CD4-positive, alpha-beta T cell (primary cell): ENCODE measurements at regions of chr9 and their contacts with region 1.

Region 1: GRCh38 chr9:100028201-100028784 is 70.5 kb downstream of the ERP44 start:
- DNase-seq: peak; percentile 34 to 77 (median 54)
- ATAC-seq: peak; percentile 92
- H3K4me3 ChIP-seq: no peak overlapping the region
- H3K4me3 Mint-ChIP-seq: no peak overlapping the region
- H3K27ac ChIP-seq: no peak overlapping the region
- H3K27ac Mint-ChIP-seq: no peak overlapping the region
- H3K4me1 ChIP-seq: no peaks in the 10 kb centered on the region
- H3K4me1 Mint-ChIP-seq: peaks cover 5% of the 10 kb centered on the region
- H3K27me3 ChIP-seq: no peaks in the 10 kb centered on the region
- H3K27me3 Mint-ChIP-seq: no peaks in the 10 kb centered on the region
- CTCF ChIP-seq: peak; percentile 87

Region 2: DNA sequence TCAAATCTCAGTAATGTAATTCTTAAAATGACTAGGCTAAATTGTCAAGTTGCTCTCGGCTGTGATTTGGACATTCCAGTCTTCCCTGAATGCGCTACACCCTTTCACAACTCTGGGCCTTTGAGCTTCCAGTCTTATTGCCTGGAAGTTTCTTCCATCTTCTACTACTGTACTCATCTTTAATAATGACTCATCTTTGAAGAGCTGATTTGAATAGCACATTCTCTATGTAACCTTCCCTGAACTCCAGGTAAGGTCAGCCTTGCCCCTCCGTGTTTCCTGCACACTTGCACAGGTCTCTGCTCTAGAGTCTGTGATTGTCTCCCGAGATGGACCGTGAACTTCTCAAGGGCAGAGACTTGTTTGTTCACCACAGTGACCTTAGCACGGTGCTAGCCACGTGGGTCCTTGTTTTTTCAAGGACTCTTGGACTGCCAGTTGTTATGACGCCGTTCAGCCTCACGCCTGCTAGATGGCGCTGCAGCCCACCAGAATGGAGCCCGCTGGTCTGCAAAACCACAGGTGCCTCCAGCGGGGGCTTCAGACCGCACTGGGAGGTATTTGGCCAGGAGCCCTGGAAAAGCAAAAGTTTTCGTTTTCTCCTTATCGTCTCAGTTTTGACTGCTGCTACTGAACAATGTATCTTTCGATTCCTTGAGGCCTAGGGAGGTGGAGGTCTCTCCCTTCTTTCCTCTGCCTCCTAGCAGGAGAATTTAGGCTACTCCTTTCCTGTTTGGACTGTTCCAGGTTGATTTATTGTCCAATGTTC is 761.9 kb before region 1 on chr9:
- CTCF ChIA-PET with region 1: no interaction called
- POLR2A ChIA-PET with region 1: no interaction called
- intact Hi-C with region 1: loop called in 1 of 2 experiments (anchors 10 kb)
- DNase-seq: peak; percentile 14 to 72 (median 42)
- ATAC-seq: peak; percentile 41
- H3K4me3 ChIP-seq: no peak overlapping the region
- H3K4me3 Mint-ChIP-seq: no peak overlapping the region
- H3K27ac ChIP-seq: no peak overlapping the region
- H3K27ac Mint-ChIP-seq: no peak overlapping the region
- H3K4me1 ChIP-seq: peaks cover 7% of the 10 kb centered on the region
- H3K4me1 Mint-ChIP-seq: peaks cover 11% of the 10 kb centered on the region
- H3K27me3 ChIP-seq: no peaks in the 10 kb centered on the region
- H3K27me3 Mint-ChIP-seq: peaks cover 9% of the 10 kb centered on the region
- CTCF ChIP-seq: peak; percentile 81

Region 3: DNA sequence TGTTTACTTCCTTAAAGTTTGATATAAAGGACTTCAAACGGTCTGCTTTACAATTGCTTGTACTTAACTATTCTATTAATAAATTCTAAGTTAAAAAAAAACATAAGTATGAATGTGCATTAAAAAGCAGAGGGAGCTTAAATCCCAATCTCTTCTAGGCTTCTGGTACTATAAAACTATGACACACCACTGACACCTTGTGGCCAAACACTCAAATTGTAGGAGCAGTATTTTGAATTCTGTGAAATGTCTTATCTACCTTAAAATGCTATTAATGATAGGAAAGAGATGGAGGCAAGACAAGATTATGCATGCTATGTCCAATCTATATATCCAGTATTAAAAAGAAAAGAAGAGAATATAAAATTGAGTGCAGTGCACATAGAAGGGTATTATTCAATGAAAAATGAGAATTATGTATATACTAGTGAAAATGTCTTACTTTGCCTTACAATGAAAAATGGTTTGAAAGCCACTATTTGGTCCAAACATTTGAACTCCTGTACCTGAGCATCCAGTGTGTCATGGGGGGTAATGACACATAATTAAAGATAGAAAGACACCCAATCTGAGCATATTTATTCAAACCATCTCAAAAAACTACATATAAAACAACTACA is 17.1 kb before region 1 on chr9:
- CTCF ChIA-PET with region 1: no interaction called
- POLR2A ChIA-PET with region 1: no interaction called
- intact Hi-C with region 1: no loop called
- DNase-seq: peak in 8 of 14 experiments; percentile 3 to 75 (median 38)
- ATAC-seq: peak; percentile 58
- H3K4me3 ChIP-seq: no peak overlapping the region
- H3K4me3 Mint-ChIP-seq: no peak overlapping the region
- H3K27ac ChIP-seq: no peak overlapping the region
- H3K27ac Mint-ChIP-seq: no peak overlapping the region
- H3K4me1 ChIP-seq: no peaks in the 10 kb centered on the region
- H3K4me1 Mint-ChIP-seq: no peaks in the 10 kb centered on the region
- H3K27me3 ChIP-seq: no peaks in the 10 kb centered on the region
- H3K27me3 Mint-ChIP-seq: no peaks in the 10 kb centered on the region
- CTCF ChIP-seq: peak; percentile 73

Region 4: DNA sequence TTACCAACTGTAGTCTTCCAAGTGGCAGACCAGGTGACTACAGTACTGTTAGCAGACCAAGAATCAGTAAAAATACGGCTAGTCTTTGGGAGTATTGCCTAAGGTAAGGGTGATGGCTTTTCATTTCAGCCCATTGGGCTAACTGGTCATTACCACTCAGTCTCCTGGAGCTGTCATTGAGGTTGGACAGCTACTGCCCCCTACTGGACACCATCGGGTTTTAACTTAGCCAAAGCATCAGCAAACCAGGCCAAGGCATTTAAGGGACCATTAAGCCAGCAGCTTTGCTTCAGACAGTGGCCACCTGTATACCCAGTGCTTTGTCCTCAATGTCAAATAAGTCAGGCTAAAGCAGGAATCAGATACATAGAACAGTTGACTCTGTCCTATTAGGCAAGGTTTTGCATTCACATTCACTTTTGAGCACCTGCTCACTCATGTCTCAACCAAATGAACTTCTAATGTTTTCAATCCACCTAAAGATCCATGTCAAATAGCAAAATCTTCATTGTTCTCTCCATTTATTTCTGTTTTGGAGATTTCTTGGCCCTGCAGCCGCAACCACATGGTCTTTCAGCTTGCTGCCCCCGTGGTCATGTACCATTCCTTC is 188.0 kb after region 1 on chr9:
- CTCF ChIA-PET with region 1: no interaction called
- POLR2A ChIA-PET with region 1: no interaction called
- intact Hi-C with region 1: loop called (anchors 1 to 5 kb)
- DNase-seq: peak; percentile 11 to 76 (median 44)
- ATAC-seq: no peak
- H3K4me3 ChIP-seq: no peak overlapping the region
- H3K4me3 Mint-ChIP-seq: no peak overlapping the region
- H3K27ac ChIP-seq: no peak overlapping the region
- H3K27ac Mint-ChIP-seq: no peak overlapping the region
- H3K4me1 ChIP-seq: no peaks in the 10 kb centered on the region
- H3K4me1 Mint-ChIP-seq: no peaks in the 10 kb centered on the region
- H3K27me3 ChIP-seq: no peaks in the 10 kb centered on the region
- H3K27me3 Mint-ChIP-seq: no peaks in the 10 kb centered on the region
- CTCF ChIP-seq: peak; percentile 50

Region 5: DNA sequence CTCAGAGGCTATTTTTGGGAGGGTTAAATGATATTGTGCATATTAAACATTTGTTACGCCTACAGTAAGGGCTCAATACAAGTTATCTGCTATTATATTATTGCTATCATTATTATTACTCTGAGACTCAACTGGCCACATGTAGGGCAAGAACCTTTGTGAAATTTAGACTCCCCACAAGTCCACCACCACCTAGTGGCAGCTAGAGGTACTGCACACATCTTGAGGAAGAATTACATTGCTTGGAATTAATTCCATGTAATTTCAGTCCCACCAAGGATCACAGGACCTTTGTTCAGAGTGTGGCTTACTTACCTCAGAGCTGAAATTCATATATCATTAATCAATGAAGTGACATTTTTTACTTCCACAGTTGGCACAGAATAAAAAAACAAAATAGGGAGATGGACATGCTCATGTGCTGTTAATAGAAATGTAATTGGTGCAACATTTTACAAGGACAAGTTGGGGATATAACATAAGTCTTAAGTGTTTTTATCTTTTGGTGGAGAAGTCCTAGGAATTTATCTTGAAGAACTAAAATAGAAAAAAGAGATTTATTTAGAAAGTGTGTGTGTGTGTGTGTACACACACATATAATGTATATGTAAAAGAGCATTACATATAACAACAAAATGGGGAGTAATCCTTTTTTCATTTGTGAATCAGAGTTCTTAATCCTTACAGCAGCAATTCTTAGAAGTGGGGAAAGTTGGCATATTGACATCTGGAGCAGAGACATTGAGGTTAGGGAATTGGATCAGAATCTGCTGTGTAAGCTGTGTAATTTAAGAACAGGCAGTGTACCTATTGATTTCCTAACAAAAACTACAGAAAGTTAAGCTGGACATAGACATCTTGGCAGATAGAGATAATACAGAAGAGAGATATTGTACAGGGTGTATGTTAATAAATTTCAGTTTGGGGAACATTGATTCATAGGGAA is 409.8 kb after region 1 on chr9:
- CTCF ChIA-PET with region 1: no interaction called
- POLR2A ChIA-PET with region 1: no interaction called
- intact Hi-C with region 1: loop called (anchors 1 to 2 kb)
- DNase-seq: peak; percentile 29 to 81 (median 60)
- ATAC-seq: peak; percentile 55
- H3K4me3 ChIP-seq: no peak overlapping the region
- H3K4me3 Mint-ChIP-seq: no peak overlapping the region
- H3K27ac ChIP-seq: no peak overlapping the region
- H3K27ac Mint-ChIP-seq: no peak overlapping the region
- H3K4me1 ChIP-seq: no peaks in the 10 kb centered on the region
- H3K4me1 Mint-ChIP-seq: no peaks in the 10 kb centered on the region
- H3K27me3 ChIP-seq: no peaks in the 10 kb centered on the region
- H3K27me3 Mint-ChIP-seq: no peaks in the 10 kb centered on the region
- CTCF ChIP-seq: peak; percentile 99